Panc1 (cell line): ENCODE measurements at regions of chr6 and their contacts with region 1.

Region 1: DNA sequence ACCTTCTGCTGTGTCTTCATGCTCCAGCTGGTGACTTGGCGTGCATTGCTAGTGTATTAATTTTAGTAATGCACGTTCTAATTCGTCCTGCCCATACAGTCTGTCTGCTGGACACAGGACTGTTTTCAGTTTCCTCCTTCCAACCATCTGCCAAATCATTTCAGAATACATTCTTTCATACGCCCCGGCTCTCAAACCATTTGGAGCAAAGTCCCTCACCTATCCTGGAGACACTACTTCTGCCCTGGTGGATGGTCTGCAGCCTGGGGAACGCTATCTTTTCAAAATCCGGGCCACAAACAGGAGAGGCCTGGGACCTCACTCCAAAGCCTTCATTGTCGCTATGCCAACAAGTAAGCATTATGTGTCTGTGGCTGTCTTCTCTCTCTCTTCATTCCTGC is 60.5 kb downstream of the FNDC1 start:
- DNase-seq: no peak
- ATAC-seq: no peak
- H3K4me3 ChIP-seq: no peak overlapping the region
- H3K27ac ChIP-seq: no peak overlapping the region
- H3K4me1 ChIP-seq: no peaks in the 10 kb centered on the region
- H3K27me3 ChIP-seq: peaks cover 18% of the 10 kb centered on the region
- CTCF ChIP-seq: no peak

Region 2: GRCh38 chr6:159184559-159184958 is 45.1 kb before region 1 on chr6:
- CTCF ChIA-PET with region 1: no interaction called
- POLR2A ChIA-PET with region 1: no interaction called
- in situ Hi-C with region 1: no loop called
- intact Hi-C with region 1: no loop called
- DNase-seq: no peak
- ATAC-seq: no peak
- H3K4me3 ChIP-seq: no peak overlapping the region
- H3K27ac ChIP-seq: no peak overlapping the region
- H3K4me1 ChIP-seq: no peaks in the 10 kb centered on the region
- H3K27me3 ChIP-seq: peaks cover 2% of the 10 kb centered on the region; the same call in 1 of the 2 replicates
- CTCF ChIP-seq: no peak

Region 3: GRCh38 chr6:159440911-159441703 is 211.5 kb after region 1 on chr6:
- CTCF ChIA-PET with region 1: no interaction called
- POLR2A ChIA-PET with region 1: no interaction called
- in situ Hi-C with region 1: no loop called
- intact Hi-C with region 1: no loop called
- DNase-seq: no peak
- ATAC-seq: no peak
- H3K4me3 ChIP-seq: no peak overlapping the region
- H3K27ac ChIP-seq: no peak overlapping the region
- H3K4me1 ChIP-seq: no peaks in the 10 kb centered on the region
- H3K27me3 ChIP-seq: peaks cover 29% of the 10 kb centered on the region
- CTCF ChIP-seq: no peak

Region 4: DNA sequence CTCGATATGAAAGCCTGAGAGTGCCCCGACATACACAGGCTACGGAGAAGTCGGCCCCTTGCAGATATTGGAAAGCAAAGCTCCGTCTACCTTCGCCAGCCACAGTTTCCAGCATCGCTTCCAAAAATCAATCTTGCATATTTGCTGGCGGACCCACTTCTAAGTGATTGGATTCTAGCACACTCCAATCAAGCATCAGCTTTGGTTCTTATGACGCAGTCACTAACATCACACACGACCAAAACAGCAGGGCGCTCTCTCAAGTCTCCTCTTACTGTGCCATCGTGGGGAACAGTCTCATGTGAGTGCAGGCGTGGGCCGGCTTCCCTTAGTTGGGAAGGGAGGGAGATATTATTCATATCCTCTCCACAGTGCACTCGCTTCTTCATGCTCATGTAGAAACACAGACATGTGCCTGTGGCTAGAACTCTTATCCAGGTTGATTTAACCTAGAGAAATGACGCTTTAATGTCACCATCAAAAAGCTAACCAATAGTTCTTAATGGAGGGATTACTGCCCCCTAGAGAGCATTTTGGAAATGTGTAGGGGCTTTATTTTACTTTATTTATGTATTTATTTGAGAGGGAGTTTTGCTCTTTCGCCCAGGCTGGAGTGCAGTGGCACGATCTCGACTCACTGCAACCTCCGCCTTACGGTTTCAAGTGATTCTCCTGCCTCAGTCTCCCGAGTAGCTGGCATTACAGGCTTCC is 233.6 kb after region 1 on chr6:
- CTCF ChIA-PET with region 1: no interaction called
- POLR2A ChIA-PET with region 1: no interaction called
- in situ Hi-C with region 1: no loop called
- intact Hi-C with region 1: loop called (anchors 10 kb)
- DNase-seq: no peak
- ATAC-seq: no peak
- H3K4me3 ChIP-seq: no peak overlapping the region
- H3K27ac ChIP-seq: no peak overlapping the region
- H3K4me1 ChIP-seq: no peaks in the 10 kb centered on the region
- H3K27me3 ChIP-seq: no peaks in the 10 kb centered on the region
- CTCF ChIP-seq: peak; percentile 50